ENCODE measurements at regions of chr7 and their contacts with region 1.

Region 1: GRCh38 chr7:144738708-144739314 is 97.0 kb downstream of the TPK1 start:
- DNase-seq: no peak
- H3K4me3 Mint-ChIP-seq: no peak overlapping the region
- H3K27ac Mint-ChIP-seq: no peak overlapping the region
- H3K4me1 Mint-ChIP-seq: no peaks in the 10 kb centered on the region
- H3K27me3 Mint-ChIP-seq: no peaks in the 10 kb centered on the region

Region 2: GRCh38 chr7:144786522-144786921 is 47.7 kb after region 1 on chr7:
- CTCF ChIA-PET with region 1: interaction called, 10 read pairs
- POLR2A ChIA-PET with region 1: no interaction called
- intact Hi-C with region 1: loop called (anchors 2 kb)
- DNase-seq: no peak
- H3K4me3 Mint-ChIP-seq: no peak overlapping the region
- H3K27ac Mint-ChIP-seq: no peak overlapping the region
- H3K4me1 Mint-ChIP-seq: peaks cover 25% of the 10 kb centered on the region
- H3K27me3 Mint-ChIP-seq: no peaks in the 10 kb centered on the region

Region 3: DNA sequence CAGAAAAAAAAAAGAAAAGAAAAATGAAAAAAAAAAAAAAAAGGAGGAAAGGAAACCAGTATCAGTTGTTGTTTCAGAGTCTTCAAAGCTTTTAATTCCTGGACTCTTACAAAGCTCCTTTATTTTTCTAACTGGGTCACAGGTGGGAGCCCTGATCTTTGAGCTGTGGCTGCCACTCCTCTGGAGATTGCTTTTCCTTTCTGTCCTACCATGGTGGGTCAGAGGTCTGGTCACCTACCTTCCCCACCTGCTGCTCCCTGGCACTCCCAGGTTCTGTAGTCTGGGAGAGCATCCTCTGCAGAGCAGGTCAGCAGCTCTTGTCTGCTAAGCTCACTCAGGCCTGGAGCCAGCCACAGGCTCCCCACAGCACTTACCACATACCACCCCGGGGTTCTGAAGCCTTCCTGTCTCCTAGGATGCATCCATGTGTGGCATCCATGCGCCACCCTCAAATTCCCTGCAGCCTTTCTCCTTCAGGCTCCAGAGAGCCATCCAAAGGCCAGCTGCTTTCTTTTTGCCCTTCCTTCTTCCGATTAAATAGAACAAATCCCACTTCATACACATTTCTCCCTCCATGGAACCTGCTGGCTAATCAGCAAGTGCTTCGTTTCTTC is 170.2 kb after region 1 on chr7:
- CTCF ChIA-PET with region 1: interaction called, 14 read pairs
- POLR2A ChIA-PET with region 1: no interaction called
- intact Hi-C with region 1: no loop called
- DNase-seq: no peak
- H3K4me3 Mint-ChIP-seq: no peak overlapping the region
- H3K27ac Mint-ChIP-seq: no peak overlapping the region
- H3K4me1 Mint-ChIP-seq: peaks cover 12% of the 10 kb centered on the region
- H3K27me3 Mint-ChIP-seq: no peaks in the 10 kb centered on the region

Region 4: DNA sequence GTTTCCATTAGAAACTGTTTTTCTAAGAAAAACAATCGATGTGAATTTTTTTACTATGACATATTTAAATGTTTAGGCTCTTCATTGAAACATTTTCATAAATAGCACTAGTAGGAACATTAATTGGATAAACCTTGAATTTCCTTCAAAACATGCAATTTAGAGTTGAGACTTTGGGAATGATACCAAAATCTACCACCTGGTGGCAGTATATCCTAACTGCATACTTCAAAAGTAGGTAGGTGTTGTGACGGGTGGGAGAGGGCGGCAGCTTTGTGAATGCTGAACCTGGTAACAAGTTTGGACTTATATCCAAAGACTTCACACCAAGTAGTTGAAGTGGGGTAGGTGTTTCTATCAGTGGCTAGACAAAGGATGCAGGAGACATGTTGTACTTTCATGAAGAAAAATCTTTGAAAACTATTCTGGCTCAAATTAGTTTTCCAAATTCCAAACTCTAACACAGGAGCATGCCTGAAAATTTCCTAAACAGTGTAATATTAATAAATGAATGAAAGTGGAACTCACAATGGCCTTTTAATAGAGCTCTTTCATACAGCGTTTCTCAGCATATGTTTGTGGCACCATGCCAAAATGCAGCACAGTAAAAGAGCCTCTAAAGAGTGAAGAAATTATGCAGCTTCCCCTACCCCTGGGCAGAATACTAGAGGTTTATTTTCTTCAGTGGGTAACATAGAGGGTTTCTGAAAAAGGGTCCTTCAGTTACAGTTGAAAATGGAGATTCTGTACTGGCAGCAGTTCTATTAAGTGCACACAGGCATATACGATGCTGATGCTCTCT is 298.0 kb after region 1 on chr7:
- CTCF ChIA-PET with region 1: no interaction called
- POLR2A ChIA-PET with region 1: no interaction called
- intact Hi-C with region 1: loop called (anchors 2 kb)
- DNase-seq: peak; percentile 43
- H3K4me3 Mint-ChIP-seq: no peak overlapping the region
- H3K27ac Mint-ChIP-seq: no peak overlapping the region
- H3K4me1 Mint-ChIP-seq: peaks cover 2% of the 10 kb centered on the region
- H3K27me3 Mint-ChIP-seq: peaks cover 11% of the 10 kb centered on the region